ENCODE measurements at regions of chr21 and their contacts with region 1.

Region 1: GRCh38 chr21:25708467-25709065 is 26.1 kb downstream of the ATP5PF start:
- DNase-seq: peak; percentile 56
- H3K4me3 ChIP-seq: no peak overlapping the region
- H3K27ac ChIP-seq: no peak overlapping the region
- H3K4me1 ChIP-seq: no peaks in the 10 kb centered on the region
- H3K27me3 ChIP-seq: no peaks in the 10 kb centered on the region
- CTCF ChIP-seq: peak; percentile 57 to 65
- POLR2A ChIP-seq: no peak

Region 2: DNA sequence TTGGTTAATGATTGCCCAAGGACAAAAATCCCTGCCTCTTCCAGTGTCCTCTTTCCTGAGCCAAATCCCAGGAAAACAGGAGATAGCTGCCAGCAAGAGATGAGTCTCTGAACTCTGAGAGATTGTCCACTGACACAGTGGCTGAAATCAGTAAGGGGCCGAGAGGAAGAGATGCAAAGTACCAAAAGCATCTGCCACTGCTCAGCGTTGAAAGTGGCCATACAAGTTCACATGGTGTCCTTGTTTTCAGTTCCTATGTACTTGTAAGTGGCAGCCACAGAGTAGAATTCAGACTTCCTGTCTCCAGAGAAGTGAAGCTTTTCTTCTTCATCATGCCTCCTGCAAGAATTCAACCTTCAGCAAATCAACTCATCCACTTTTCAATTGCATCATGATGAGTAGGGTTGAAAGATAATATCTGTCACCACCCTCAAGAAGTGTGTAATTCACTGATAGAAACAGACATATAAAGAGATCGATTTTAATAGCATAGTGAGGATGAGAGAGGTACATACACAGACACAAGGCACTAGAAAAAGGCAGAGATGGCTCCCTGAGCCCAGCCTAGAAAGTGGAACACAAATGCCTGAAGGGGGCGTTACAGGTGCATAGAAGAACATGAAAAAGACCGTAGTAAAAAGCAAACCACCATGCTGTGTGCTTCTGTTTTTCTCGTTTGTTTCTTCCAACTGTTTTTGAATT is 287.1 kb before region 1 on chr21:
- CTCF ChIA-PET with region 1: interaction called, 10 read pairs
- POLR2A ChIA-PET with region 1: no interaction called
- dilution Hi-C with region 1: no loop called
- intact Hi-C with region 1: loop called (anchors 1 kb)
- DNase-seq: peak; percentile 60
- H3K4me3 ChIP-seq: no peak overlapping the region
- H3K27ac ChIP-seq: no peak overlapping the region
- H3K4me1 ChIP-seq: no peaks in the 10 kb centered on the region
- H3K27me3 ChIP-seq: no peaks in the 10 kb centered on the region
- CTCF ChIP-seq: peak; percentile 29 to 59
- POLR2A ChIP-seq: no peak

Region 3: GRCh38 chr21:25688275-25689155 is 20.1 kb before region 1 on chr21:
- CTCF ChIA-PET with region 1: no interaction called
- POLR2A ChIA-PET with region 1: no interaction called
- dilution Hi-C with region 1: no loop called
- intact Hi-C with region 1: loop called (anchors 2 kb)
- DNase-seq: peak; percentile 62
- H3K4me3 ChIP-seq: no peak overlapping the region
- H3K27ac ChIP-seq: no peak overlapping the region
- H3K4me1 ChIP-seq: peaks cover 10% of the 10 kb centered on the region
- H3K27me3 ChIP-seq: no peaks in the 10 kb centered on the region
- CTCF ChIP-seq: no peak
- POLR2A ChIP-seq: no peak

Region 4: DNA sequence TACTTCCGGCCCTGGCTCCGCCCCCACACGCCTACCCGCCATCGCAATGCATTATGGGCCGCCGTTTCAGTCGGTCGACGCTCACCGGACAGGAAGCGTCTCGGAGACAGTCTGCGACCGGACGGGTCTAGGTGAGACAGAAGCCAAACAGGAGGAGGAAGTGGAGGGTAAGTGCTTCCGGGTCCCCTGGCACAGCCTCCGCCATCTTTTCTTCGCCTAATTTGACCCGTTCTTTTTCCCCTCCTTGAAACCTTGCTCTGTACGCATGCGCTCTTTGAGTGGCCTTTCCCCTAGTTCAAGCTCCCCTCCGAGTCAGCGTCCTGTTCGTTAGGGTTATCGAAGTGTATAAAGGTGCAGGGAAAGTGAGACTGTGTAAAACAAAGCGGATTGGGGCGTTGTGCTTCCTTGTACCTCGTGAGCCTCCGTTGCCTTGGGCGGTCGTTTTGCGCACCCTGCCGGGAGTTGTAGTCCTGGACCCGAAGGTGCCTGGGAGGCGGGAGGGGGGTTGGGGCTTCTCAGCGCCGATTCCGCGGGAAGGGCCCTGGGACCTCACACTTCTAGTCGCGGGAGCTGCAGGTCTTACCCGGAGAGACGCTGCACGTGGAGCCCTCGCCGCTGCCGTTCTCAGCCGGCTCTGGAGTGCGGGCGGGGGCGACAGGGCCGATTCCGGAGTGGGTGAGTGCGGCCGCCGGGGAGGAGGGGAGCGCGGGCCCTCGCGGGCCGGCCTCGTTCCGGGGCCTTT is 26.5 kb after region 1 on chr21 and contains the starts of genes ATP5PF and GABPA:
- CTCF ChIA-PET with region 1: interaction called, 5 read pairs
- POLR2A ChIA-PET with region 1: no interaction called
- dilution Hi-C with region 1: no loop called
- intact Hi-C with region 1: loop called (anchors 2 kb)
- DNase-seq: peak; percentile 98
- H3K4me3 ChIP-seq: peak within 1 kb of the TSS; percentile 93 to 99 (median 98)
- H3K27ac ChIP-seq: peak within 1 kb of the TSS; percentile 99
- H3K4me1 ChIP-seq: peaks cover 17% of the 10 kb centered on the region
- H3K27me3 ChIP-seq: no peaks in the 10 kb centered on the region
- CTCF ChIP-seq: no peak
- POLR2A ChIP-seq: peak; percentile 85
- total RNA-seq, gene ATP5PF: 132 and 141 TPM in 2 replicates
- total RNA-seq, gene GABPA: 21.0 and 24.1 TPM in 2 replicates